CD4-positive, alpha-beta memory T cell (primary cell): ENCODE measurements at regions of chr6 and their contacts with region 1.

Region 1: GRCh38 chr6:118776607-118777549 is 117.1 kb upstream of the ASF1A start:
- DNase-seq: peak; percentile 63 to 73 (median 71)
- H3K4me3 ChIP-seq: no peak overlapping the region
- H3K4me3 Mint-ChIP-seq: peak overlapping the region in 6 of 8 donors; percentile 2 to 71 (median 50)
- H3K27ac ChIP-seq: no peak overlapping the region
- H3K27ac Mint-ChIP-seq: peak overlapping the region; percentile 16 to 90 (median 74)
- H3K4me1 ChIP-seq: peaks cover 21% of the 10 kb centered on the region
- H3K4me1 Mint-ChIP-seq: peaks cover 17 to 26% (median 21%) of the 10 kb centered on the region in 4 donors
- H3K27me3 ChIP-seq: no peaks in the 10 kb centered on the region
- H3K27me3 Mint-ChIP-seq: no peaks in the 10 kb centered on the region

Region 2: DNA sequence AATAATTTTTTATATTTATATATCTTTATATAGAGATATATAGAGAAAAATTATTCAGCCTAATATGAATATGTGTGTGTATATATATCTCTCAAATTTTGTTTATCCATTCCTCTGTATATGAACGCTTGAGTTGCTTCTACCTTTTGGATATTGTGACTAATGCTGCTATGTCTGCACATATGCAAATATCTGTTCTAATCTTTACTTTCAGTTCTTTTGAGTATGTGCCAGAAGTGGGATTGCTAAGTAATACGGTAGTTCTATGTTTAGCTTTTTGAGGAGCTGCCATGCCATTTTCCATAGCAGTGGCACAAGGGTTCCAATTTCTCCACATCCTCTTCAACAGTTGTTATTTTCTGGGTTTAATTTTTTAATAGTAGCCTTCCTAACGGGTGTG is 52.7 kb before region 1 on chr6:
- CTCF ChIA-PET with region 1: no interaction called
- POLR2A ChIA-PET with region 1: no interaction called
- intact Hi-C with region 1: loop called (anchors 2 kb)
- DNase-seq: no peak
- H3K4me3 ChIP-seq: no peak overlapping the region
- H3K4me3 Mint-ChIP-seq: peak overlapping the region in 5 of 8 donors; percentile 7 to 71 (median 59)
- H3K27ac ChIP-seq: no peak overlapping the region
- H3K27ac Mint-ChIP-seq: peak overlapping the region in 4 of 7 donors; percentile 23 to 87 (median 58)
- H3K4me1 ChIP-seq: peaks cover 48% of the 10 kb centered on the region
- H3K4me1 Mint-ChIP-seq: peaks cover 30 to 79% (median 46%) of the 10 kb centered on the region in 4 donors
- H3K27me3 ChIP-seq: no peaks in the 10 kb centered on the region
- H3K27me3 Mint-ChIP-seq: no peaks in the 10 kb centered on the region

Region 3: GRCh38 chr6:118787724-118788423 is 11.0 kb after region 1 on chr6:
- CTCF ChIA-PET with region 1: interaction called, 57 read pairs
- POLR2A ChIA-PET with region 1: interaction called, 8 read pairs
- intact Hi-C with region 1: no loop called
- DNase-seq: peak; percentile 38 to 58 (median 54)
- H3K4me3 ChIP-seq: no peak overlapping the region
- H3K4me3 Mint-ChIP-seq: peak overlapping the region in 7 of 8 donors; percentile 8 to 74 (median 59)
- H3K27ac ChIP-seq: peak overlapping the region; percentile 18
- H3K27ac Mint-ChIP-seq: peak overlapping the region; percentile 77 to 97 (median 95)
- H3K4me1 ChIP-seq: peaks cover 29% of the 10 kb centered on the region
- H3K4me1 Mint-ChIP-seq: peaks cover 27 to 40% (median 34%) of the 10 kb centered on the region in 4 donors
- H3K27me3 ChIP-seq: no peaks in the 10 kb centered on the region
- H3K27me3 Mint-ChIP-seq: no peaks in the 10 kb centered on the region

Region 4: GRCh38 chr6:119116712-119117281 is 339.9 kb after region 1 on chr6:
- CTCF ChIA-PET with region 1: no interaction called
- POLR2A ChIA-PET with region 1: no interaction called
- intact Hi-C with region 1: no loop called
- DNase-seq: no peak
- H3K4me3 ChIP-seq: no peak overlapping the region
- H3K4me3 Mint-ChIP-seq: no peak overlapping the region
- H3K27ac ChIP-seq: no peak overlapping the region
- H3K27ac Mint-ChIP-seq: no peak overlapping the region
- H3K4me1 ChIP-seq: no peaks in the 10 kb centered on the region
- H3K4me1 Mint-ChIP-seq: no peaks in the 10 kb centered on the region
- H3K27me3 ChIP-seq: no peaks in the 10 kb centered on the region
- H3K27me3 Mint-ChIP-seq: peaks cover 0 to 5% of the 10 kb centered on the region in 2 donors